ENCODE measurements at regions of chr17 and their contacts with region 1.

Region 1: GRCh38 chr17:42677008-42677857 is 439 bp upstream of the PLEKHH3 start:
- DNase-seq: peak; percentile 100
- H3K4me3 ChIP-seq: peak overlapping the region; percentile 33
- CTCF ChIP-seq: no peak
- POLR2A ChIP-seq: no peak

Region 2: DNA sequence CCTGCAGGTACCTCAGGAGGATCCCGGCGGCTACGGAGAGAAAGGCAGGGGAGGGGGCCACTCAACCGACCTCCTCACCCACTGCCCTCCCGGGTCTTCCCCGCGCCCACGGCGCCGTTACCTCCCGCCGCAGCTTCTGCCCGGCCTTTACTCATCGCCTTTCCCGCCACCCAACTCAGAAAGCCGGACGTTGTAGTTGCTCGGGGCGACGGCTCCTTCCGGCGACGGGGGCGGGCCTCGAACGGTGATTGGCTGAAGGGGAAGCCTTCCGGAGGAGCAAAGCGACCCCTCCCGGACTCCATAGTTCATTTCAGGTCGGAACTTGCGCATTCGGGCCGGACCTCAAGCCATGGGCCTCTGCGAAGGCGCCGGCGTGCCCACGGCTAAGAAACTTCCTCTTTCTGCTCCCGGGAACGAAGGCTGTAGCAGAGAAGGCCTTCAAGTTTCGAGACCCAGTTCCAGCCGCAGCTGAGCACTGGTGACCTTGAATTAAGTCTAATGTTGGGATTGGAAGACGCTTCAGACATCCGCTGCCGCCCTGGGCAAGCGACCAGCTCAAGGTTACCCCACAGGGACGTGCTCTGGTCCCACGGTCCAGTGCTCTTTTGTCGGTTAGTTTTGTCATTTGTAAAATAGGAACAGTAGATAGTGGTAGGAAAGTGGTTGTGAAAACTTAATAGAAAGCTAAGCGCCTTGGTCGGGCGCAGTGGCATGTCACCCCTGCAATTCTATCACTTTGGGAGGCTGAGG is 99.5 kb before region 1 on chr17 and contains the start of gene PSMC3IP:
- intact Hi-C with region 1: loop called (anchors 10 kb)
- DNase-seq: peak; percentile 95 to 99
- H3K4me3 ChIP-seq: peak within 1 kb of the TSS; percentile 38
- CTCF ChIP-seq: peak in 1 of 3 donors; percentile 7
- POLR2A ChIP-seq: no peak
- total RNA-seq, gene PSMC3IP: 0.67 to 3.6 (median 1.8) TPM

Region 3: DNA sequence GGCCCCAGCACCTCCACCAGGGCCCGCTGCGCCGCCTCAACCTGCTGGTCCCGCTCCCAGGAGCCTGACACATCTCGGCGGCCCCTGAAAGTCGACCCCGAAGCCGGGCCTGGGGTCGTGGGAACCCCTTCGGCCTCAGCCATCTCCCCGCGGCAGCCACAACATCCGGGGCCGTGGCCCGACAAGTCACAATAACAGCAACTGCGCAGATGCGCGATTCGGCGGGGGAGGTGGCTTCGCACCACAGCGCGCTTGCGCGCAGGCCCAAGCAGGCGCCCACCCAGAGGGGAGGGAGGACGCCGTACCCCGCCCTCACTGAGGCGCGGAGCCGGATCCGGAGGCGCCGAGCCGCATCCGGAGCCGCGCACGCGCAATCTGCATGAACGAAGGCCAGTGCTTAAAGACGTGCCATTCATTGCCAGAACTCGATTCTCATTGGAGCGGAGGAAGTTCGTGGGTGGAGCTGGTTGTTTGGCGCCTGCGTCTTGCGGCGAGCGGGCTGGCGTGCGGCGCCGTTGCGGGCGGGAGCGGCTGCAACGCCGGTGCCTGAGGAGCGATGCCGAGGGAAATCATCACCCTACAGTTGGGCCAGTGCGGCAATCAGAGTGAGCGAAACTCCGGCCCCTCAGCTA is 67.9 kb before region 1 on chr17 and contains the starts of genes RETREG3 and TUBG1:
- intact Hi-C with region 1: loop called (anchors 2 kb)
- DNase-seq: peak; percentile 97 to 99
- H3K4me3 ChIP-seq: peak within 1 kb of the TSS; percentile 98
- CTCF ChIP-seq: no peak
- POLR2A ChIP-seq: peak in 1 of 2 donors; percentile 86
- total RNA-seq, gene RETREG3: 69.4 to 106 (median 84.3) TPM
- total RNA-seq, gene TUBG1: 54.4 to 61.1 (median 56.7) TPM

Measured in lower leg skin (tissue), 4 donors.